ENCODE measurements at regions of chr13 and their contacts with region 1.

Region 1: DNA sequence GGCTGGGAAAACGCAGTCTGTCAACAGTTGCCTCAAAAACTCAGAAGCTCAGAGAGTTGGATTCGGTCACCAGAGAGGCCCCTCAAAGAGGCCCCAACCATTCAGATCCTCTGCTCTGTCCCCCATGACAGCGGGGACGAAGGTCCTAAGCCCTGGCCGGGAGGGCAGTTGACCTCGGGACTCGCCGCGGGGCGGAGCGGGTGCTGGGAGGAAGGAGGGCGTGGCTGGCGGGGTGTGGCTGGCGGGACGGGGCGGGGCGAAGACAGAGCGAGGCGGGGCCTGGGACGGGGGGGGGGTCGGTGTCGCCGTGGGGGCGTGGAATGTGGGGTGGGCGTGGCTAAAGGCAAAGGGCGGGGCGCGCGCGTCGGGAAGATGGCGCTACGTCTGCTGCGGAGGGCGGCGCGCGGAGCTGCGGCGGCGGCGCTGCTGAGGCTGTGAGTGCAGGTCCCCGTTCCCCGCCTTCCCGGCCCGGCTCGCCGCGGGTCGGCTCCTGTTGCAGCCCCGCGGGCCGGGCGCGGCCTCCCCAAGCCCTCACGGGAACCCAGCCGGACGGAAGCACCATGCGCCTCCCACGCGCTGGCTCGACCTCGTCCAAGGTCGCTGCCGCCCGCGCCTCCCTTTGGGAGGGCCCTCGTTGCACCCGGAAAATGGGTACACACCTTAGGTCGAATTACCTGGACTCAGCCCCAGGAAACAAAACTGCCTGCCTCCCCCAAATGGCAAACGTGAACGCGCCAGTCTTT is 105.2 kb downstream of the TM9SF2 start:
- DNase-seq: peak; percentile 90
- ATAC-seq: peak; percentile 89
- H3K4me3 Mint-ChIP-seq: peak within 1 kb of the TSS; percentile 79
- H3K27ac Mint-ChIP-seq: peak within 1 kb of the TSS; percentile 85
- H3K4me1 Mint-ChIP-seq: peaks cover 28% of the 10 kb centered on the region
- H3K27me3 Mint-ChIP-seq: no peaks in the 10 kb centered on the region
- CTCF ChIP-seq: no peak

Region 2: DNA sequence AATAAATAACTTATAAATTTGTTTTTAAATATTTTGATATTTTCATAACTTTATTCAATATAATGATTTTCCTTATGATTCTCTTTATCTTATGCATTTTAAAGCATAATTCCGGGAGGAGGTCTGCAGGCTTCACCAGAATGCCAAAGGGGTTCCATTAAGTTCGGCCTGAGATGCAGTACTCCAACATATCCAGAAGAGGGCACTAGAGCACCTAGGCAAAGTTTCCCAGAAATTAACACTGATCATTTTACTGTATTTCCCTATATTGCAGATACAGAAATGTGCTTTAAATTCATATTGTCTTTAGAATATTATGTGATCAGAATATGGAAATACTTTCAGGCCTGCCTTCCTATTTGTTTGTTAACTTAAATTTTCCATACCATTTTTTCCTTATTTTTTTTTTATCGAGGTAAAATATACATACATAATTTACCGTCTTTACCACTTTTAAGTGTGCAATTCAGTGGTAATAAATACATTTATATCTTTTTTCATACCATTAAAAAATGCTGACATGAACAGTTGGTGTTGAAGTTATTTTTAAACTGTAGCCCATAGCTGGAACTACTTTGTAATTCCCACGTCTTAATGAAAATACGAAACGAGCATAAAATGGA is 164.1 kb before region 1 on chr13:
- CTCF ChIA-PET with region 1: interaction called, 11 read pairs
- POLR2A ChIA-PET with region 1: no interaction called
- DNase-seq: peak; percentile 27
- ATAC-seq: no peak; the same call in 1 of the 2 replicates
- H3K4me3 Mint-ChIP-seq: no peak overlapping the region
- H3K27ac Mint-ChIP-seq: no peak overlapping the region
- H3K4me1 Mint-ChIP-seq: peaks cover 32% of the 10 kb centered on the region
- H3K27me3 Mint-ChIP-seq: no peaks in the 10 kb centered on the region
- CTCF ChIP-seq: peak; percentile 88

Region 3: GRCh38 chr13:99590519-99591011 is 15.9 kb before region 1 on chr13:
- CTCF ChIA-PET with region 1: no interaction called
- POLR2A ChIA-PET with region 1: no interaction called
- DNase-seq: no peak
- ATAC-seq: no peak
- H3K4me3 Mint-ChIP-seq: no peak overlapping the region
- H3K27ac Mint-ChIP-seq: no peak overlapping the region; the same call in 1 of the 2 replicates
- H3K4me1 Mint-ChIP-seq: no peaks in the 10 kb centered on the region
- H3K27me3 Mint-ChIP-seq: peaks cover 3% of the 10 kb centered on the region; the same call in 1 of the 2 replicates
- CTCF ChIP-seq: no peak

Measured in WTC11 (cell line).